ENCODE measurements at regions of chr7 and their contacts with region 1.

Region 1: DNA sequence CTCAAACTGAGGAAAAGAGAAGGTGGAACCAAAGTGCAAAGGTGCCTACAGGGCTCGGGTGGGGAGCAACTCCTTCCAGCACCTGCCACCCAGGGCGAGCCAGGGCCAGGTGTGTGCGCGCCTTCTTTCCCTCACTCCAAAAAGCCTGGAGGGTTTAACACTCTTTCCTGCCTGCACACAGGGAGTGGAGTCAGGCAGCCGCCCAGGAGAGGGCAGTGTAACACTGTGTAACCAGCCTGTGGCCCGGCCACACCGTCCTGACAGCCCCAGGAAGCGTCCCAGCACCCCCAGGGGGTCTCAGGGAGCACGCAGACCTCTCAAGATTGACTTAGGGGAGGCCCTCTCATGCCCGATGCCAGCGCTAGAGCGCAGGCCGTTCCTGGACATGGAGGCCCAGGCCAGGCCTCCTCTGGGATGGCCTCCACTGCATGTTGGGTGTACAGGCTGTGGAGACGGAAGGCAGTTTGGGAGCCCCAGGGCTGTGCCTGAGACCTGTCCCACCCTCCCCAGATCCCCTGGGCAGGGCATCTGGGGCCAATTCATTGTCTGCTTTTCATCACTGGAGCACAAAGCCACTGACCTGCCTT is 13.4 kb downstream of the BRI3 start:
- DNase-seq: peak; percentile 49
- ATAC-seq: peak; percentile 79
- H3K4me3 Mint-ChIP-seq: no peak overlapping the region
- H3K27ac Mint-ChIP-seq: no peak overlapping the region
- H3K4me1 Mint-ChIP-seq: no peaks in the 10 kb centered on the region
- H3K27me3 Mint-ChIP-seq: no peaks in the 10 kb centered on the region
- CTCF ChIP-seq: no peak

Region 2: DNA sequence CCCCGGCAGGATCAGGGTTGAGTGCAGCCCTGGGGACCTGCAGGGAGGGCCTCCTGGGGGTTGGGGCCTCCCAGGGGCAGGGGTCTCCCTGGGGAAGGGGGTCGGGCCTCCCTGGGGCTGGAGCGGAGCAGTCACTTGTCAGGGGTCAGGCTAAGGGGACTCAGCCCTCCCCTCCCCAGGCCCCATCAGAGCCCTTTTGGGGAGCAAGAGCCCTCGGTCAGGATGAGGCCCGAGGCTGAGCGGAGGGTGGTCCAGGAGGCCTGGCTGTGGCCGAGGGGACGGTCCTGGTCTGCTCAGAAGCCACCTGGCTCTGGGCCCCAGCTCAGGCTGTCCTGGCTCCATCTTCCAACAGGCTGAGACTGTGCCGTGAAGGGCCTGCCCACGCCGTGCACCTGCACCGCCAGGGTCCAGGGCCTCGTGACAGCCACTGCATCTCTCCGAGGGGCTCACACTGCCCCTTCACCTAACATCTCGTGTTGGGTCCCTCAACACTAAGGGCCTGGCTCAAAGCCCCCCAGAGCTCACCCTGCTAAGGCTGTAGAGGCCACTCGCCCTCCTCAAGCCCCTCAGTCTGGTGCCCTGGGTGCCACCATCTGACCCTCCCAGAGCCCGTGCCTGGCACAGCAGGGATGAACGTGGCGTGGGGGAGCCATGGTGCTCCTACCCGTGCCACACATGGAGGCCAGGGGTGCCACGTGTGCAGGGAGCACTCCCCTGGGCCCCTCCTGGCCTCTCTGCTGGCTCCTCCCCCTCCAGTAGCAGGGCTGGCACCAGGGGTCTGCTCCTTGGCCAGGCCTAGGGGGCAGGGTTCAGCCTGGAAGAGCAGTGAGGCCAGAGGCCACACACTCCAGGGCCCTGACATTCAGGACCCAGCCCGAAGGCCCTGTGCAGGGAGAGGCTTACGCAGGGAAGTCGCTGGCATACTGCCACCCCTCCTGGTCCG is 70.7 kb before region 1 on chr7:
- CTCF ChIA-PET with region 1: no interaction called
- POLR2A ChIA-PET with region 1: no interaction called
- intact Hi-C with region 1: no loop called
- DNase-seq: no peak
- ATAC-seq: no peak
- H3K4me3 Mint-ChIP-seq: no peak overlapping the region
- H3K27ac Mint-ChIP-seq: no peak overlapping the region
- H3K4me1 Mint-ChIP-seq: peaks cover 12% of the 10 kb centered on the region
- H3K27me3 Mint-ChIP-seq: no peaks in the 10 kb centered on the region
- CTCF ChIP-seq: no peak

Region 3: DNA sequence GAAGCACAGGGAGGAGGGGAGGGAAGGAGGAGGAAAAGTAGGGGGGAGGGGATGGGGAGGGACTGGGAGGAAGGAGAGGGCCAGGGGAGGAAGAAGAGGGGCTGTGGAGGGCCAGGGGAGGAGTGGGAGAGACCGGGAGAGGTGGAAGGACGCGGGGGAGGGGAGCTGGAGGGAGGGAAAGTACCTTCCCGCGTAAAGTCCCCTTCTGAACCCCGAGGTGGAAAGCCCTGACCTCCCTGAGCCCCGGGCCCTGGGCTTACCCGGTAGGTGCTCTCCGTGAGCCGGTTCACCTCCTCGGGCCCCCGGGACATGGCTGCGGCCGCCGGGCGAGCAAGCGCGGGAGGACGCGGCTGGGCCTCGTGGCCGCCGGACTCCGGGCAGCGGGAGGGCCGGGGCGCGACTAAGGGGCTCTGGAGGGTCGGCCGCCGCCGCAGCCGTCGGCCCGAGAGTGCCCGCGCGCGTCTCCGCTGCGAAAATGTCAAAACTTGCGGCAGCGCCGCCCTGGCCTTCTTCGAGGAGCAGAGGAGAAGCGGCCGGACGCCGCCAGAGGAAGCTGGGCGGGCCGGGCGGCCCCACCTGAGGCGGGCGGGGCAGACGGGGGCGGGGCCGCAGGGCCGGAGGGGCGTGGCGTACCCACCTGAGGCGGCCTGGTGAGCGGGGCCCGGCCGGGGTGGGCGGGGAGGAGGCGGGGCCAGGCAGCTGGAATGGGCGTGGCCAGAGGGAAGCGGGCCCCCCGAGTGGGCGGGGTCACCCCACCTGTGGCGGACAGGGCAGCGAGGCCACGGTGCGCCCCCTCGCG is 105.9 kb after region 1 on chr7 and contains the start of gene BAIAP2L1:
- CTCF ChIA-PET with region 1: interaction called, 6 read pairs
- POLR2A ChIA-PET with region 1: no interaction called
- intact Hi-C with region 1: loop called (anchors 1 kb)
- DNase-seq: peak; percentile 87
- ATAC-seq: peak; percentile 92
- H3K4me3 Mint-ChIP-seq: peak within 1 kb of the TSS; percentile 76
- H3K27ac Mint-ChIP-seq: peak within 1 kb of the TSS; percentile 35
- H3K4me1 Mint-ChIP-seq: peaks cover 27% of the 10 kb centered on the region
- H3K27me3 Mint-ChIP-seq: peaks cover 26% of the 10 kb centered on the region
- CTCF ChIP-seq: no peak
- total RNA-seq, gene BAIAP2L1: 8.1 and 10.4 TPM in 2 replicates

Region 4: DNA sequence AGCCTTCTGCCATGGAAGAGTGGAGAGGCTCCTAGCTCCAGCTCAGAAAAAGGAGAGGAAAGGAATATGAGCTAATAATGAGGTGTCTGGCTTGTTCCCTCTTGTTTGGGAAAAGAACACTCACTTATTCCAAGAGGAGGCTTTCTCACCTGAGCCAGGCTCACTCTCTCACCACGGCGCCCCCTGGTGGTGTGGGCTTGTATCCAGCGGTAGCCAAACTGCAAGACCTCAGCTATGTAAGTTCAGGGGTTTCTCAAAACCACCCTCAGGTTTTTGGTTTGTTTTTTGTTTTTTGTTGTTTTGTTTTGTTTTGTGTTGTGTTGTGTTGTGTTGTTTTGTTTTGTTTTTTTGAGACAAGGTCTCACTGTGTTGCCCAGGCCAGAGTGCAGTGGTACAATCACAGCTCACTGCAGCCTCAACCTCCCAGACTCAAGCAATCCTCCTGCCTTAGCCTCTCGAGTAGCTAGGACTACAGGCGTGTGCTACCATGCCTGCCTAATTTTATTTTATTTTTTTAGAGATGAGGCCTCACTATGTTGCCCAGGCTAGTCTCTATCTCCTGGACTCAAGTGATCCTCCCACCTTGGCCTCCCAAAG is 450.9 kb after region 1 on chr7:
- CTCF ChIA-PET with region 1: interaction called, 7 read pairs
- POLR2A ChIA-PET with region 1: no interaction called
- intact Hi-C with region 1: loop called (anchors 1 kb)
- DNase-seq: peak; percentile 62
- ATAC-seq: peak; percentile 31
- H3K4me3 Mint-ChIP-seq: no peak overlapping the region
- H3K27ac Mint-ChIP-seq: no peak overlapping the region
- H3K4me1 Mint-ChIP-seq: no peaks in the 10 kb centered on the region
- H3K27me3 Mint-ChIP-seq: peaks cover 12% of the 10 kb centered on the region
- CTCF ChIP-seq: peak; percentile 87